ENCODE measurements at regions of chr17 and their contacts with region 1.

Region 1: DNA sequence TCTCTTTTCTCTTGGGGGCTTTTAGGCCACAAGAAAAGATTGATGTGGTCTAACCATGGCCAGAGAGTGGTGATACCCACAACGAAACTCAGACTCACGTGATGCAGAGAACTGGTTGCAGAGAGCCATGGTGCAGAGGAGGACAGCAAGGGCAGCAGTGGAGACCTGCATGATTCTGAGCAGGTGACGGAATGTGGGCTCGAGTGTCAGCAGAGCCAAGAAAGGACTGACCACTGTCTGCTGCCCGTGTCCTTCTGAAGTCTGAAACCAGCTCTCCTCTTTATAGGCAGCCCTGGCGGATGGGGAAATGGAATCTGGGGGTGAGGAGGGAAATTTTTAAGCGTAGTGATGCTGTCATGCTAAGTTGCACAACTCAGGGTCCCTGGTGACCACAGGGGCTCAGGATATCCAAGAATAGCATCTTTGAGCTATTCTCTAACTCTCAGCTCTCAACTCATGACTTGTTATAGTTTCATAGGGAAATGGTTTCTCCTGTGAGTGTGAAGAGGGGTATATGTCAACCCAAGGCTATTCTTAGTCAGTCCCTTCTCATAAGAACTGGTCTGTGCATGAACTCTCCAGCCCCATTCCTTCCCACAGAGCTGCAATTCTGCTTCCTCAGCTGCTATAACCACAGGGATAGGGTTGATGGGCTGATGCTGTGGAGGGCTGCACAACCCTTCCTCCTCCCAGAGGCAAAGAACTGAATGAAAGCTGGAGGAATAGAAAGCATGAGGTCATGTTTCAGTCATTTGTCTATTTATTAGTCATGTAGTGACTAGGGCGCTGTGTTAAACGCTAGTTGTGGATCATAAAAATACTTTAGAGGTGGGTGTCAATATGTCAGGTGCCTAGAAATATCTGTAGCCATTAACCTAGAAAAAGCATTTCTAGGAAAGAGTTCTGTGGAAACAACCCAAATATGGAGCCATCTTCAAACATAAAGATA is at the start of gene CCL3:
- DNase-seq: peak; percentile 71
- ATAC-seq: peak; percentile 78
- H3K4me3 Mint-ChIP-seq: peak within 1 kb of the TSS; percentile 86
- H3K27ac Mint-ChIP-seq: peak within 1 kb of the TSS; percentile 96
- H3K4me1 Mint-ChIP-seq: peaks cover 79% of the 10 kb centered on the region
- H3K27me3 Mint-ChIP-seq: no peaks in the 10 kb centered on the region
- CTCF ChIP-seq: no peak
- total RNA-seq, gene CCL3: 74.4 and 74.5 TPM in 2 replicates

Region 2: DNA sequence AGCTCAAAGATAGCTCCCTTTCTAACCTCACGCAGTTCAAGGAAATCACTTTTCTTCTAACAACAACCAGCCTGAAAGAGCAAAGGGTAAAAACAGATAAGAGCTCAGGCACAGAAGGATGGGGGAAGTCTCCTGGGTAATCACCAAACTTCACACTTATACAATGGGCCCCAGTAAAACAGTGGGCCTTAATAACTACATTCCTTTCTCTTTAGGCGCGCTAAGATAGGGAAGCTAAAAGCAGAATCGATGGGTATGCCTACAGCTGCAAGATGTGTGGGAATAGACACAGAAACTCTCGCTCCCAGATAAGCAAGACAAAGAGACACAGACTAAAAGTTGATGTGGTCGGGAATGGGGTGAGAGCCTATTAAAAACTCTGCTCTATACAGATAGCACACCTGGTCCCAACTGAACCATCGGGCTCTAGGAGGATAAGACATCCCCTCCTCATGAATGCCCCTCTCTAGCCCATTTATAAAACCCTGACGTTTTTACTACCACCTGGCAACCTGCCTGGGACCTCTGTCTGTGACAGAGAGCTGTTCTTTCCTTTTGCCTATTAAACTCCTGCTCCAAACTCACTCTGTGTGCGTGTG is 147.5 kb before region 1 on chr17:
- CTCF ChIA-PET with region 1: no interaction called
- POLR2A ChIA-PET with region 1: no interaction called
- intact Hi-C with region 1: no loop called
- DNase-seq: no peak
- ATAC-seq: no peak
- H3K4me3 Mint-ChIP-seq: no peak overlapping the region
- H3K27ac Mint-ChIP-seq: no peak overlapping the region
- H3K4me1 Mint-ChIP-seq: no peaks in the 10 kb centered on the region
- H3K27me3 Mint-ChIP-seq: peaks cover 2% of the 10 kb centered on the region
- CTCF ChIP-seq: no peak

Region 3: GRCh38 chr17:35981908-35982330 is 108.2 kb before region 1 on chr17:
- CTCF ChIA-PET with region 1: no interaction called
- POLR2A ChIA-PET with region 1: no interaction called
- intact Hi-C with region 1: loop called (anchors 1 kb)
- DNase-seq: no peak
- ATAC-seq: peak; percentile 54
- H3K4me3 Mint-ChIP-seq: no peak overlapping the region
- H3K27ac Mint-ChIP-seq: no peak overlapping the region
- H3K4me1 Mint-ChIP-seq: peaks cover 12% of the 10 kb centered on the region
- H3K27me3 Mint-ChIP-seq: peaks cover 11% of the 10 kb centered on the region
- CTCF ChIP-seq: no peak

Region 4: DNA sequence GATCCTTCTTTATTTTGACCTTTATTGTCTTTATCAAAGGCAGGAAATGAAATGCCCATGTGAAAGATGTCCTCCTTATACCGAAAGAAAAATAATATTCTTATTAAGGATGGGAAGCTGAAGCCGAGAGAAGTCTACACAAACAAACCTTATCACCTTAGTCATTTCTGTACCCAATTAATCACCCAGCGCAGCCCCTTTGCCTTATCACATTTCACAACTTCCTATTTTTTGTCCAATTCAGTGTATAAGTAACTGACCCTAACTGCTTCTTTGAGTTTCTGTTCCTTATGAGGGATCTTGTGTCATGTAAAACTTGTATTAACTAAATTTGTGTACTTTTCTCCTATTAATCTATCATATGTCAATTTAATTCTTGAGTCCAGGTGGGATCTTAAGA is 56.0 kb before region 1 on chr17:
- CTCF ChIA-PET with region 1: no interaction called
- POLR2A ChIA-PET with region 1: interaction called, 4 read pairs
- intact Hi-C with region 1: loop called (anchors 1 kb)
- DNase-seq: no peak
- ATAC-seq: peak; percentile 96
- H3K4me3 Mint-ChIP-seq: no peak overlapping the region
- H3K27ac Mint-ChIP-seq: peak overlapping the region; percentile 6
- H3K4me1 Mint-ChIP-seq: peaks cover 23% of the 10 kb centered on the region
- H3K27me3 Mint-ChIP-seq: peaks cover 12% of the 10 kb centered on the region
- CTCF ChIP-seq: no peak

Region 5: GRCh38 chr17:36107660-36108059 is 17.5 kb after region 1 on chr17:
- CTCF ChIA-PET with region 1: no interaction called
- POLR2A ChIA-PET with region 1: interaction called, 25 read pairs
- intact Hi-C with region 1: loop called (anchors 1 kb)
- DNase-seq: no peak
- ATAC-seq: no peak
- H3K4me3 Mint-ChIP-seq: no peak overlapping the region
- H3K27ac Mint-ChIP-seq: no peak overlapping the region
- H3K4me1 Mint-ChIP-seq: peaks cover 46% of the 10 kb centered on the region
- H3K27me3 Mint-ChIP-seq: peaks cover 5% of the 10 kb centered on the region
- CTCF ChIP-seq: no peak

Region 6: GRCh38 chr17:36133602-36134236 is 43.6 kb after region 1 on chr17:
- CTCF ChIA-PET with region 1: no interaction called
- POLR2A ChIA-PET with region 1: interaction called, 15 read pairs
- intact Hi-C with region 1: loop called (anchors 2 kb)
- DNase-seq: no peak
- ATAC-seq: no peak
- H3K4me3 Mint-ChIP-seq: no peak overlapping the region
- H3K27ac Mint-ChIP-seq: peak overlapping the region; percentile 8
- H3K4me1 Mint-ChIP-seq: peaks cover 91% of the 10 kb centered on the region
- H3K27me3 Mint-ChIP-seq: no peaks in the 10 kb centered on the region
- CTCF ChIP-seq: no peak

Region 7: GRCh38 chr17:36198831-36199465 is 108.8 kb after region 1 on chr17:
- CTCF ChIA-PET with region 1: no interaction called
- POLR2A ChIA-PET with region 1: interaction called, 5 read pairs
- intact Hi-C with region 1: loop called (anchors 5 kb)
- DNase-seq: no peak
- ATAC-seq: peak; percentile 28
- H3K4me3 Mint-ChIP-seq: peak overlapping the region; percentile 24
- H3K27ac Mint-ChIP-seq: peak overlapping the region; percentile 47
- H3K4me1 Mint-ChIP-seq: peaks cover 57% of the 10 kb centered on the region
- H3K27me3 Mint-ChIP-seq: peaks cover 6% of the 10 kb centered on the region
- CTCF ChIP-seq: no peak

Measured in activated B cell treated with CpG ODN at 0.5 μM for 24 hours (primary cell).